ENCODE measurements at regions of chr18 and their contacts with region 1.

Region 1: GRCh38 chr18:62957885-62958472 is 242.6 kb downstream of the PHLPP1 start:
- DNase-seq: peak; percentile 75
- ATAC-seq: peak; percentile 82
- H3K4me3 Mint-ChIP-seq: no peak overlapping the region
- H3K27ac Mint-ChIP-seq: no peak overlapping the region
- H3K4me1 Mint-ChIP-seq: peaks cover 8% of the 10 kb centered on the region
- H3K27me3 Mint-ChIP-seq: no peaks in the 10 kb centered on the region
- CTCF ChIP-seq: peak; percentile 61

Region 2: GRCh38 chr18:62637807-62638687 is 319.9 kb before region 1 on chr18:
- CTCF ChIA-PET with region 1: interaction called, 14 read pairs
- POLR2A ChIA-PET with region 1: no interaction called
- intact Hi-C with region 1: no loop called
- DNase-seq: peak; percentile 78
- ATAC-seq: peak; percentile 83
- H3K4me3 Mint-ChIP-seq: no peak overlapping the region
- H3K27ac Mint-ChIP-seq: no peak overlapping the region
- H3K4me1 Mint-ChIP-seq: peaks cover 7% of the 10 kb centered on the region
- H3K27me3 Mint-ChIP-seq: peaks cover 13% of the 10 kb centered on the region
- CTCF ChIP-seq: no peak

Region 3: DNA sequence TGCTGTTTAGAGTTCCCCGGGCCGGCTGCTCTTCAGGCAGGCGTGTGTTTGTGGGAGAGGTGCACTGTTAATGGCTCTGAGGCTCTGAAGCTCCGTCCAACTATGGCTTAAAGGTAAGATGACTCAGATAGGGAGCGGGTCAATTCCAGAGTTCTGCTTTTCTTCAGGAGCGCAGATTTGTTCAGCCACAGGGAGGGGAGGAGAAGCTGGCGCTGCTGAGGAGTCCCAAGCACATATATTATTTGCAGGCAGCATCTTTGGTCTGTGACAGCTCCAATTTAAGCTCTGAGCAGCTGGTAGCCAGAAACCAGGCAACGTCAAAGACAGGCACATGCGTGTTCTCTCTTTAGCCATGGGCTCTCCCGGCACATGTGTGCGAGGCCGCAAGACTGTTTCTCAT is 132.3 kb after region 1 on chr18:
- CTCF ChIA-PET with region 1: no interaction called
- POLR2A ChIA-PET with region 1: no interaction called
- intact Hi-C with region 1: no loop called
- DNase-seq: no peak
- ATAC-seq: no peak
- H3K4me3 Mint-ChIP-seq: no peak overlapping the region
- H3K27ac Mint-ChIP-seq: no peak overlapping the region
- H3K4me1 Mint-ChIP-seq: no peaks in the 10 kb centered on the region
- H3K27me3 Mint-ChIP-seq: peaks cover 1% of the 10 kb centered on the region
- CTCF ChIP-seq: no peak

Measured in activated CD8-positive, alpha-beta T cell treated with anti-CD3 and anti-CD28 coated beads for 36 hours (primary cell).